Adrenal gland (tissue), 19 donors: ENCODE measurements at regions of chr6 and their contacts with region 1.

Region 1: GRCh38 chr6:41602864-41603608 is 35.2 kb upstream of the MDFI start:
- DNase-seq: peak; percentile 78 to 90 (median 81)
- H3K4me3 ChIP-seq: peak overlapping the region in 1 of 4 donors; percentile 33
- H3K27ac ChIP-seq: no peak overlapping the region
- H3K4me1 ChIP-seq: peaks cover 0 to 10% of the 10 kb centered on the region in 2 donors
- H3K27me3 ChIP-seq: no peaks in the 10 kb centered on the region
- CTCF ChIP-seq: peak; percentile 72 to 92 (median 88)
- POLR2A ChIP-seq: no peak

Region 2: DNA sequence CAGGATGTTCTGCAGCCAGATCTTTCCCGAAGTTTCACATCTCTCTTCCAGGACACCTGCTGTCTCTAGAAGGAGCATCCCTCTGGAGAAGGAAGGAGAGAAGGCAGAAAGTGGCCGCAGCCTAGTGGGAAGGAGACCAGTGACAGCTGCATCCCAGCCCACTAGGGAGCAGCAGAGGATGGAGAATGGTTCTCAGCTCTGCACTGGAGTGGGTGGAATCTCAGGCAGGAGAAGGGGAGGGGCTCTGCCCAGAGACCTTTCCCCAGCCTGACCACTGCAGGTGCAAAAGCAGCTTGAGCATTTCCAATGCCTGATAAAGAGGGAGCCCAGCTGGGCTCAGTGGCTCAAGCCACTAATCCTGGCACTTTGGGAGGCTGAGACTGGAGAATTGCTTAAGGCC is 235.3 kb before region 1 on chr6:
- intact Hi-C with region 1: loop called in 1 of 2 experiments (anchors 5 kb)
- DNase-seq: peak in 5 of 7 donors; percentile 24 to 57 (median 35)
- H3K4me3 ChIP-seq: no peak overlapping the region
- H3K27ac ChIP-seq: no peak overlapping the region
- H3K4me1 ChIP-seq: peaks cover 4 to 13% of the 10 kb centered on the region in 2 donors
- H3K27me3 ChIP-seq: peaks cover 56% of the 10 kb centered on the region
- CTCF ChIP-seq: peak in 5 of 6 experiments; percentile 17 to 50 (median 47)
- POLR2A ChIP-seq: no peak

Region 3: DNA sequence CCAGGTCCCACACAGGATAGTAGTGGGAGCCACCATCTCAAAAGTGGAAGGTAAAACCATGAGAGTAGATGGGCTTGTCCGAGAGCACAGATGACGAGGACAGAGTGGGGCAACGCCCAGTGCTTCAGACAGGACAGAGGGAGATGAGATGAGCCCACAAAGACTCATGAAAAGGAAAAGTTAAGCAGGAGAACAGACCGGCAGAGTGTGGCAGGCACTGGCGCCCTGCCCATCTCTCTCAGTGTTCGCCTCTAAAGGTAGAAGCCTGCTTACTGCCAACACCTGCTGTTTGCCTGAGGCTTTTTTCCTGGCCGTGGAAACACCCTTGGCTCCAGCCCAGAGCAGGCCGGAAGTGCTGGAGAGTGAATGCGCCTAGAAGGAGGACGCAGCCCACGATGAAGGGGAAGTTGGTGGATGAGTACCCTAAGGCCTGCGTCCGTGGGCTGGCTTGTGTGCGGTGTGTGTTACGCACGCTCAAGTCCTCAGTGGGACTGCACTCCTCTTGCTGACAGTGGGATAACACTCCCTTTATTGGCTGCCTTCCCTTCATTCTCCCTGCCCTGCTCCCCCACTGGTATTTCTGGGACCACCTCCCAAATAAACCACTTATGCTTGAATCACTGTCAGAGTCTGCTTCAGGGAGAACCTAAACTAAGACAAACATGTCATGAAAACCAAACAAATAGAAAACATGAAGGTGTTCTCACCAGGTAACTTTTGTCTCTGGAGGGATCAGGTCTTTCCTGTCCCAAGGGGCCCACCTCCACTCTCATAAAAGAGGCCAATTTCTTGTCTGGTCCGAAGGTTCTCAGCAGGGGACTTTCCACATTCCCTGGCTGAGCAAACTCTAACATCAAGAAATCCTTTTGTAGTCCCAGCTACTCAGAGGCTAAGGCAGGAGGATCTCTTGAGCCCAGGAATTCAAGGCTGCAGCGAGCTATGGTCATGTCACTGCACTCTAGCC is 66.0 kb before region 1 on chr6:
- intact Hi-C with region 1: no loop called
- DNase-seq: peak in 1 of 7 donors; percentile 54
- H3K4me3 ChIP-seq: no peak overlapping the region
- H3K27ac ChIP-seq: no peak overlapping the region
- H3K4me1 ChIP-seq: peaks cover 0 to 4% of the 10 kb centered on the region in 2 donors
- H3K27me3 ChIP-seq: peaks cover 2% of the 10 kb centered on the region
- CTCF ChIP-seq: no peak
- POLR2A ChIP-seq: no peak